ENCODE measurements at regions of chr5 and their contacts with region 1.

Region 1: GRCh38 chr5:77177576-77177975 is 32.9 kb upstream of the PDE8B start:
- DNase-seq: no peak
- ATAC-seq: no peak
- H3K4me3 ChIP-seq: no peak overlapping the region
- H3K4me3 Mint-ChIP-seq: no peak overlapping the region
- H3K27ac ChIP-seq: no peak overlapping the region
- H3K27ac Mint-ChIP-seq: no peak overlapping the region
- H3K4me1 ChIP-seq: peaks cover 0 to 8% of the 10 kb centered on the region in 2 experiments
- H3K4me1 Mint-ChIP-seq: peaks cover 0 to 4% (median 2%) of the 10 kb centered on the region in 3 donors
- H3K27me3 ChIP-seq: peaks cover 11 to 24% of the 10 kb centered on the region in 2 experiments
- H3K27me3 Mint-ChIP-seq: peaks cover 16 to 33% of the 10 kb centered on the region in 2 donors

Region 2: GRCh38 chr5:75511435-75512384 is 1665.9 kb before region 1 on chr5 and contains the starts of genes CERT1 and POLK:
- CTCF ChIA-PET with region 1: no interaction called
- POLR2A ChIA-PET with region 1: interaction called in 1 of 2 experiments, 10 read pairs
- DNase-seq: peak; percentile 78 to 94 (median 86)
- ATAC-seq: peak; percentile 91 to 94 (median 92)
- H3K4me3 ChIP-seq: peak within 1 kb of the TSS; percentile 84 to 87
- H3K4me3 Mint-ChIP-seq: peak within 1 kb of the TSS; percentile 93 to 94 (median 93)
- H3K27ac ChIP-seq: peak within 1 kb of the TSS; percentile 73
- H3K27ac Mint-ChIP-seq: peak within 1 kb of the TSS; percentile 91 to 94
- H3K4me1 ChIP-seq: peaks cover 17 to 24% of the 10 kb centered on the region in 2 experiments
- H3K4me1 Mint-ChIP-seq: peaks cover 58 to 70% (median 69%) of the 10 kb centered on the region in 3 donors
- H3K27me3 ChIP-seq: no peaks in the 10 kb centered on the region
- H3K27me3 Mint-ChIP-seq: no peaks in the 10 kb centered on the region
- total RNA-seq, gene CERT1: 35.7 to 39.4 (median 38.0) TPM
- total RNA-seq, gene POLK: 21.8 to 26.2 (median 25.0) TPM

Region 3: DNA sequence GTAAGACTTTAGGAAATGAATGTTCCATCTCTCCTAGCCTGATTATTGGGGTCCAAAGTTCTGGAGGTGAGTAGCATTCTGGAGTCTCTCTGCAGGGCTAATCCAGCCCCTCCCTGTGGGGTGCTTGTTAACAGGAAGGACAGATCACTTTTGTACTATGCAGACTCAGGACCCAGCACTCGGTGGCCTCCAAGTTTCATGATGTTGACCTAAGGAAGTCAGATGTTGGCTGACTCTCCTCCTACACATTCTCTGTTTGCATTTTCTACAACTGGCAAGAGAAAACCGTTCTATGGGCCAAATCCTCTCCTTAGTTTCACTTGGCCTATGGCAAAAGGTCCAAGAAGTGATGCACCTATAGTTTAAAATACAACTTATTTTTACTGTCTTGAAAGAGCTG is 27.4 kb after region 1 on chr5:
- CTCF ChIA-PET with region 1: no interaction called
- POLR2A ChIA-PET with region 1: no interaction called
- DNase-seq: no peak
- ATAC-seq: no peak
- H3K4me3 ChIP-seq: no peak overlapping the region
- H3K4me3 Mint-ChIP-seq: no peak overlapping the region
- H3K27ac ChIP-seq: no peak overlapping the region
- H3K27ac Mint-ChIP-seq: no peak overlapping the region
- H3K4me1 ChIP-seq: peaks cover 0 to 7% of the 10 kb centered on the region in 2 experiments
- H3K4me1 Mint-ChIP-seq: peaks cover 6 to 14% (median 6%) of the 10 kb centered on the region in 3 donors
- H3K27me3 ChIP-seq: peaks cover 0 to 13% of the 10 kb centered on the region in 2 experiments
- H3K27me3 Mint-ChIP-seq: peaks cover 20 to 21% of the 10 kb centered on the region in 2 donors

Measured in T-cell (primary cell).